ENCODE measurements at regions of chr7 and their contacts with region 1.

Region 1: DNA sequence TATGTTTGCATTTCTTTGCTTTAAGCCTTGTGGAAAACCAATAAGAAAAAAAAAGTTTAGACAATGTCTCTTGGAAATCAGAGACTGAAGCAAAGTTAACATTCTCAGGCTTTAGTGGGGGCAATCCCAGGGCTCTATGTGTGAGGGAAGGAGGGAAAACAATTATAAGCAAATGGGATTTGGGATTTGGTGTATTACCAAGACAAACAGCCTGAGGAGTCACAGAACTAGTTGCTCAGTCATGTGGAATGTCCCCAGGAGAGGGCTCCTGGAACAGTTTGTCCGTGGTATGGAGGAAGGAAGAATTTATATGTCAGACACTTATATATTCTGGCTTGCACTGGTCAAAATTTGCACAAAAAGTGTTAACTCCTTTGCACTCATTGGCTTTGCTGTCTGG is 562.9 kb upstream of the TPK1 start:
- DNase-seq: no peak
- ATAC-seq: peak in 5 of 8 donors; percentile 24 to 82 (median 75)
- H3K4me3 ChIP-seq: no peak overlapping the region
- H3K27ac ChIP-seq: no peak overlapping the region
- H3K4me1 ChIP-seq: no peaks in the 10 kb centered on the region
- H3K27me3 ChIP-seq: no peaks in the 10 kb centered on the region
- CTCF ChIP-seq: no peak

Region 2: DNA sequence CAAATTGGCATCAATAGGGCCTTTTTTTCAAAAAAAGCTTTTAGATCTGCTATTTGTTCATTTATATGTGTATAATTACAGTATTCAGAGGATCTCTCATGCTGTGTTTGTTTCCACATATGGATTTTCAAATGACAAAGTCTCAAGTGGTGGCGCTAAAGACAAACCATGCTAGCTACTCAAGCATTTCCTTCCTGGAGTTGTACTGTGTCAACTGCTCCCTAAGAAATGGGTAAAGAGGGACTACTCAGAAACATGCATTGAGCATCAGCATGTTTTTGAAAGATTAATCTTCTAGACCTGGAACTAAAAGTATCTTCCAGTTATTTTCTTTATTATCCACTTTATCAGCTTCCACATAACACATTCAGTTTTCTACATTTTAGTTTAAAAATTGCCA is 730.5 kb after region 1 on chr7:
- intact Hi-C with region 1: loop called in 1 of 10 experiments (anchors 10 kb)
- DNase-seq: no peak
- ATAC-seq: no peak
- H3K4me3 ChIP-seq: no peak overlapping the region
- H3K27ac ChIP-seq: no peak overlapping the region
- H3K4me1 ChIP-seq: no peaks in the 10 kb centered on the region
- H3K27me3 ChIP-seq: no peaks in the 10 kb centered on the region
- CTCF ChIP-seq: no peak